ENCODE measurements at regions of chr5 and their contacts with region 1.

Region 1: DNA sequence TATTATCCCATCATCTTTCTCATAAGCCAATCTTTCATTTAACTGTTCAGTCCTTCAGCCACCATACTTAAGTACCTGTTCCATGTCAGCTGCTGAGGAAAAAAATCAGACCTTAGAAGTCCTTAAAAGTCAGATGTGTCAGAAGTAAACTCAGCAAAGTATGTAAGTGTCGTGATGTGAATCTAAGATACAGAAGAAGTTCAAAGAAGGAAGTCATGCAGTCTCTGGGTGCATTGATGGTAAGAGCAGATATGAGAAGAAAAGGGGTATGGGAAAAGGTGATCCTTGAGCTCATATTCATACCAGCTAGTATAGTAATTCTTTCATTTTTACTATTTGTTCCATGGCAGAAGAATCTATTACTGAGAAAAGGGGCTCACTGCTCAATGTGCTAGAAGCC is 259.4 kb upstream of the CD180 start:
- DNase-seq: no peak
- H3K4me3 ChIP-seq: no peak overlapping the region
- H3K27ac ChIP-seq: no peak overlapping the region
- H3K4me1 ChIP-seq: no peaks in the 10 kb centered on the region
- H3K27me3 ChIP-seq: no peaks in the 10 kb centered on the region
- CTCF ChIP-seq: no peak
- EP300 ChIP-seq: no peak
- POLR2A ChIP-seq: no peak

Region 2: DNA sequence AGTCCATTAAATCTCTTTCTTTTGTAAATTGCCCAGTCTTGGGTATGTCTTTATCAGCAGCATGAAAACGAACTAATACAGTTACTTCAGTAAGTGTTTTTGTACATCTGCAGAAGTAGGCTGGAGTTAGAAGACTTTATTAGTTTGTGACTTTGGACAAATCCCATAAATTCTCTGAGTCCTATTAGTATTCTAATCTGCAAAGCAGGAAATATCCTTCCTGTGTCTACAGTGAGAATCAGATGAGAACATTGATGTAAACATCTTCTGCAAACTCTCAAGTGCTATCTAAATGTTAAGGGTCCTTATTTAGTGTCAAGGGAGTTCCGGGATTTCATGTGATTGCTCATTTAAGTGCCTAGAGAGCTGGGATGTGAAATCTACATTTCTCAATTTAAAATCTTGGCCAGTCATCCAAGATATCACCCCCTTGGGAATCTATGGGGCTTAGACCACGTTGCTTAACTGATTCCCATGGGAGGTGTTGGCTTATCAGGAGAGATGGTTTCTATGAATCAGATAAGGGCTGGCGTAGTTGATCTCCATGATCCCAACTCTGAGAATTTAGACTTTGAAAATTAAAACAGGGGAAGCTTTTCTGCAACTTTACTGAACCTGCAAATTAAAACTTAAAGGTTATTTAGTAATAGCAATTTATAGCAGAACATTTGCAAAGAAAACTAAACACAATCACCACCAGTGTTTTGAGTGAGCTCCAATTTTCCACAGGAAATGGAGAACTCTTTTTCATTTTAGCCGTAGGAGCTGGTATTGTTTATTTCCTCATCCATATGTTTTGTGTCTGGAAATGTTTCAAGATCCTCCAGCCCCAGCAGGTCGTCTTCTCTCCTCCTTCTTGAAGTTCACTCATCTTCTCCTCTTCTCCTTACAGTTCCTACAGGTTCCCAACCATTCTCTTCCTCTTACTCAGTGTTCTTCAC is 17.8 kb before region 1 on chr5:
- intact Hi-C with region 1: loop called in 1 of 4 experiments (anchors 2 kb)
- DNase-seq: no peak
- H3K4me3 ChIP-seq: no peak overlapping the region
- H3K27ac ChIP-seq: no peak overlapping the region
- H3K4me1 ChIP-seq: no peaks in the 10 kb centered on the region
- H3K27me3 ChIP-seq: no peaks in the 10 kb centered on the region
- CTCF ChIP-seq: no peak
- EP300 ChIP-seq: no peak
- POLR2A ChIP-seq: no peak

Region 3: DNA sequence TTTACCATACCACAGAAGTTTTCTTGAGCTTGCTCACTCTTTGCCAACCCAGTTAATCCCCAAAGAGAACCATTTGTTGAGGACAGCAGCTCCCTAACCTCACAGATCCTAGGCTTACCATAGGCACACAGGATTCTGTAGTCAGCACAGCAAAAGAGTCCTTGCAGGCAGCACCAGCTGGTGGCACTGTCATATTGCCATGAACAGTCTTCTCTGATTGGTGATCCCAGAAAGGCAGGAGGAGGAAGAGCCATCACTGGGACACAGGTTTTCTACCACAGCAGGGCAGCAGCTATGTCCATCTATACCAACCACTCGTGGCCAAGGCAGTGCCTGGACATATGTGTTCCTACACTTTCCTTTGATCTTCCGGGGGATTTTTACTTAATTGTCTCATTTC is 37.7 kb after region 1 on chr5:
- intact Hi-C with region 1: no loop called
- DNase-seq: peak in 1 of 5 donors; percentile 14
- H3K4me3 ChIP-seq: no peak overlapping the region
- H3K27ac ChIP-seq: no peak overlapping the region
- H3K4me1 ChIP-seq: peaks cover 2% of the 10 kb centered on the region
- H3K27me3 ChIP-seq: no peaks in the 10 kb centered on the region
- CTCF ChIP-seq: no peak
- EP300 ChIP-seq: no peak
- POLR2A ChIP-seq: no peak

Measured in ovary (tissue), 10 donors.